ENCODE measurements at regions of chr3 and their contacts with region 1.

Region 1: DNA sequence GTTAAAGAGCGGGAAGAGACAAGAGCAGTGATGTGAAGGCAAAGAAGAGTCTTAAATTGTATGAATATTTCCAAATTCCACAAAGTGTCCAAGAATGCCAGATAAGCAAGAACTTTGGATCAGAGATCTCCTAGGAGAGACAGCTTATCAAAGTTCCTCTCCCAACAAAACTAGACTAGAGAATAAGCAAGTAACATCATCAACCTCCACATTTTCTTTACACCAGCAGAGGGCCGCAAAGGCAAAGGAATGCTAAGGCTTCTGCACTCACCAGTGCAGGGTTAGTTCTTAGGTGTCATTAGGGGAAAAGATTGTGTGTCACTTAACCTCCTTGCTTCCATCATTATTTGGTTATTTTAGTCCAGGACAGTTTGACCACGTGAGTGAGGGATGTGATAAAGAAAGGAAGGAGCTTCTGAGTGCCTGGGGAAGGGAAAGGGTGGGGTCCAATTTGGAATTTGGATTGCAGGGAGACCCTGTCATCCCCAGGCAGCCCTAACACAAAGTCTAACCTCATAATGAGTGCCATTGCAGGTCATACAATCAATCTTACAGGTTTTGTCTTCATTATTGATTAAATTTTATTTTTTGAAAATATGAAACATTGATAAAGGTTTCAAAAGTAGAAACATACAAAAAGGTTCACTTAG is 7.5 kb upstream of the CMTM6 start:
- DNase-seq: peak; percentile 64 to 88 (median 73)
- H3K4me3 ChIP-seq: no peak overlapping the region
- H3K27ac ChIP-seq: no peak overlapping the region
- H3K4me1 ChIP-seq: no peaks in the 10 kb centered on the region
- H3K27me3 ChIP-seq: no peaks in the 10 kb centered on the region
- CTCF ChIP-seq: peak; percentile 44 to 89 (median 81)
- POLR2A ChIP-seq: no peak

Region 2: DNA sequence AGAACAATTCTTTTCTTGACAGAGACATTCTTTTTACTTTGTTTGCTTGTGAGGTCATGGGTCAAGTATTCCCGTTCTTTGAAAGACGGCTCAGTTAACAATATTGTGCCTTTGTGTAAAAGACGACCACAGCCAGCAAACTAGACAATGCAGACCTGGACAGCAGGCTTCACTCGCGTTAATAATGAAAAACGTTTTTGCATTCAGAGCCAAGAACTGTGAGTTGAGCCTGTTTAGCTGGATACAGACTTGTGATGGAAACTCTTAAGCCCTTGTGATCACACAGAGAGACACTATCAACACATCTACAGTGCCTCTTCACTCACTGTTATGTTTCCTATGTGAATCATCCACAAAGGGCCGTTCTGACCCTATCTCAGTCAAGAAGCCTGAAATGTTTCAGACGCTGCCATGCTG is 155.8 kb before region 1 on chr3:
- intact Hi-C with region 1: no loop called
- DNase-seq: no peak
- H3K4me3 ChIP-seq: no peak overlapping the region
- H3K27ac ChIP-seq: no peak overlapping the region
- H3K4me1 ChIP-seq: no peaks in the 10 kb centered on the region
- H3K27me3 ChIP-seq: no peaks in the 10 kb centered on the region
- CTCF ChIP-seq: no peak
- POLR2A ChIP-seq: no peak

Region 3: GRCh38 chr3:32453346-32453745 is 56.9 kb before region 1 on chr3:
- intact Hi-C with region 1: no loop called
- DNase-seq: no peak
- H3K4me3 ChIP-seq: no peak overlapping the region
- H3K27ac ChIP-seq: no peak overlapping the region
- H3K4me1 ChIP-seq: no peaks in the 10 kb centered on the region
- H3K27me3 ChIP-seq: no peaks in the 10 kb centered on the region
- CTCF ChIP-seq: no peak
- POLR2A ChIP-seq: no peak

Region 4: DNA sequence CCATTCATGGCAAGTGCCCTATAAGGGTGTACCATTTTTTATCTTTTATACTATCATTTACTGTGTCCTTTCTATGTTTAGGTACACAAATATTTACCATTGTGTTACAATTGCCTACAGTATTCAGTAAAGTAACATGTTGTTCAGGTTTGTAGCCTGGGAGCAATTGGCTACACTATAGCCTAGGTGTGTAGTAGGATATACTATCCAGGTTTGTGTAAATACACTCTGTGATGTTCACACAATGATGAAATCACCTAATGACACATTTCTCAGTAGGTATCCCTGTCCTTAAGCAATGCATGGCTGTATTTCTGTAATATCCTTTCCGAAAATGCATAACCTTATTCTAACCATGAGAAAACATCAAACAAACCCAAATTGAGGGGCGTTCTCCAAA is 156.9 kb after region 1 on chr3:
- intact Hi-C with region 1: loop called (anchors 5 kb)
- DNase-seq: no peak
- H3K4me3 ChIP-seq: no peak overlapping the region
- H3K27ac ChIP-seq: no peak overlapping the region
- H3K4me1 ChIP-seq: no peaks in the 10 kb centered on the region
- H3K27me3 ChIP-seq: no peaks in the 10 kb centered on the region
- CTCF ChIP-seq: no peak
- POLR2A ChIP-seq: no peak